ENCODE measurements at regions of chr3 and their contacts with region 1.

Region 1: DNA sequence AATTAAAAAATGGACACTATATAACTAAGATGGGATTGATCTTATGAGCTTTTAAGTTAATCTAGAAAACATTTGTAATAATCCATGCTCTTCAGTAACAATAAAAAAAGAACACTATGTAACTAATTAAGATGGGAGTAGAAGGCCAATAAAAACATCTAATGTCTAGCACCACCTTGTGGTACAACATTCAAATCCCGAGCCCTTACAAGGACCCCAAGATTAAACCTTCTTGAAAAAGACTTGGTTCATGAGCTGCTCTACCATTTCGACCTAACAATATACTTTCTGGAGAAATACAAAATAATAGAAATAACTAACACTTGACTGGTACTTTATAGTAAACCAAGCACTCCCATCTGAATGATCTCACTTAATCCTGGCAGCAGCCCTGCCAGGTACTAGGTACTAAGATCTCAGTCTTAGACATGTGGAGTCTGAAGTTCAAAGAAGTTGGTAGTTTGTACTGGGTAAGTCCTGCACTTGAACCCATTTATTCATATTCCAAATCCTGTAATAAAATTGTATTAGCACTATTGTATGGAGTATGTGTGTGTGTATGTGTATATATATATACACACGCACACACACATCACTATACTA is 21.8 kb downstream of the METTL6 start:
- DNase-seq: peak; percentile 49 to 61 (median 55)
- H3K4me3 ChIP-seq: no peak overlapping the region
- H3K4me3 Mint-ChIP-seq: no peak overlapping the region
- H3K27ac ChIP-seq: no peak overlapping the region
- H3K27ac Mint-ChIP-seq: peak overlapping the region in 4 of 7 donors; percentile 8 to 40 (median 24)
- H3K4me1 ChIP-seq: peaks cover 3% of the 10 kb centered on the region
- H3K4me1 Mint-ChIP-seq: peaks cover 7 to 22% (median 14%) of the 10 kb centered on the region in 4 donors
- H3K27me3 ChIP-seq: no peaks in the 10 kb centered on the region
- H3K27me3 Mint-ChIP-seq: no peaks in the 10 kb centered on the region

Region 2: DNA sequence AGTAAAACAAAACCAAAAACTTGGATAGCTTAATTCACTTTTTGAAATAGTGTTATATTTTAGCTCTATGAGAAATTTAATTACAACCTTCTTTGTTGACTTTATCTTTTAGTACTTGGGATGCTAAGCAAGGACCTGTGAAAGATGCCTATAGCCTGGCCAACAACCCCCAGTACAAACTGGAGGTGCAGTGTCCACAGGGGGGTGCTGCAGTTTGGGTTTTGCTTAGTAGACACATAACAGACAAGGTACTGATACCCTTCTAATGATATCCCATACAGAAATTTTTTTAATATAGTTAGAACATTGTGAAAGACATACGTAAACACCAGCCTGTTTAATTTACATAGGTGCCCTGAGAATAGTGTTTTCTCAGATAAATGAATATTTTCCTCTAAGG is 164.2 kb before region 1 on chr3:
- CTCF ChIA-PET with region 1: interaction called, 6 read pairs
- POLR2A ChIA-PET with region 1: no interaction called
- intact Hi-C with region 1: loop called (anchors 1 kb)
- DNase-seq: peak; percentile 36 to 51 (median 44)
- H3K4me3 ChIP-seq: no peak overlapping the region
- H3K4me3 Mint-ChIP-seq: no peak overlapping the region
- H3K27ac ChIP-seq: no peak overlapping the region
- H3K27ac Mint-ChIP-seq: peak overlapping the region in 1 of 7 donors; percentile 73
- H3K4me1 ChIP-seq: no peaks in the 10 kb centered on the region
- H3K4me1 Mint-ChIP-seq: peaks cover 0 to 9% (median 4%) of the 10 kb centered on the region in 4 donors
- H3K27me3 ChIP-seq: no peaks in the 10 kb centered on the region
- H3K27me3 Mint-ChIP-seq: no peaks in the 10 kb centered on the region

Region 3: DNA sequence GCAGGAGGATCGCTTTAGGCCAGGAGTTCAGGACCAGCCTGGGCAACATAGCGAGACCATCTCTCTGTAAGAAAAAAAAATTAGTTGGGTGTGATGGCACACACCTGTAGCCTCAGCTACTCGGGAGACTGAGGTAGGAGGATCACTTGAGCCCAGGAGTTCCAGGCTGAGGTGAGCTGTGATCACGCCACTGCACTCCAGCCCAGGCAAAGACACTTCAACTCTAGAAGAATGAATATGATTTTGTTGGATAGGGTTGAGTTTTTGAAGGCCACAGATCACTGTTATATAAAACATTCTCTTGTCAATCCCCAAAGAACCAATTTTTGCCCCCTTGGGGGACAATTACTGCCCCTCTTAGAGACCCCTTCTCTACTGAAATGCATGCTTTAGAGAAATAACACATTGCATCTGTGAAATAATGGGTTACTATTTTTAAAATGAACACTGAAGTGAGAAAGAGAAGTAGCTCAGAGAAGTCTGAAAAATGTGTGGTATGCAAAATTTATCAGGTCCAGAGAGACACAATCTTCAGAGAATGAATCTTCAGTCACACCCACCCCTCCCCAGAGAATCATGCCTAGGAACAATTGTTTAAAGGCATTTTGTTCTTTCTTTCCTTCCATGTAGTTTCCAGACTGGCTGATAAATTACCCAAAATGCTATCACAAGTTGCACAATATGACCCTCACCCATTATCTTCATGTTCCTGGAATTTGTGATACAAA is 20.9 kb before region 1 on chr3:
- CTCF ChIA-PET with region 1: interaction called, 12 read pairs
- POLR2A ChIA-PET with region 1: no interaction called
- intact Hi-C with region 1: no loop called
- DNase-seq: no peak
- H3K4me3 ChIP-seq: no peak overlapping the region
- H3K4me3 Mint-ChIP-seq: no peak overlapping the region
- H3K27ac ChIP-seq: no peak overlapping the region
- H3K27ac Mint-ChIP-seq: peak overlapping the region in 2 of 7 donors; percentile 37
- H3K4me1 ChIP-seq: no peaks in the 10 kb centered on the region
- H3K4me1 Mint-ChIP-seq: peaks cover 0 to 7% (median 3%) of the 10 kb centered on the region in 4 donors
- H3K27me3 ChIP-seq: no peaks in the 10 kb centered on the region
- H3K27me3 Mint-ChIP-seq: no peaks in the 10 kb centered on the region

Region 4: DNA sequence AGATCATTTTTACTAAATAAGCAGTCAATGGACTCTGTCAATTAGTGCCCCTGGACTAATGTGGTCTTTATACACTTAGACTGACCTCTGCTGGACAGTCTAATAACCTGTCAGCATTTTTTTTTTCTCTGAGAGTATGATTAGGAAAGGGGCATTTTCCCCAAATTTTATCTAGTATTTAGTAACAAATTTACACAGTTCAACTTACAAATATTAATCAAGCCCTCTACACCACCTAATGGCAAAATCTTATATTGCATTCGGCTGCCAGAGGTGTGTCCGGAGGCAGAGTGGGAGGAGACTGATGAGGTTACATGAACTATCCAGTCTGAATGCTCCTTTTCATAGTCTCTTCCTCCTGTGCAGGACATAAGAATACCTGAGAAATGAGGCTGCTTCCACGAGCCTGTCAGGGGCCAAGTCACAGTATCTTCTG is 152.0 kb after region 1 on chr3:
- CTCF ChIA-PET with region 1: interaction called, 12 read pairs
- POLR2A ChIA-PET with region 1: no interaction called
- intact Hi-C with region 1: no loop called
- DNase-seq: peak; percentile 67 to 82 (median 79)
- H3K4me3 ChIP-seq: no peak overlapping the region
- H3K4me3 Mint-ChIP-seq: peak overlapping the region in 2 of 8 donors; percentile 9 to 59
- H3K27ac ChIP-seq: no peak overlapping the region
- H3K27ac Mint-ChIP-seq: peak overlapping the region; percentile 5 to 75 (median 62)
- H3K4me1 ChIP-seq: peaks cover 19% of the 10 kb centered on the region
- H3K4me1 Mint-ChIP-seq: peaks cover 17 to 23% (median 20%) of the 10 kb centered on the region in 4 donors
- H3K27me3 ChIP-seq: no peaks in the 10 kb centered on the region
- H3K27me3 Mint-ChIP-seq: no peaks in the 10 kb centered on the region

Measured in CD4-positive, alpha-beta memory T cell (primary cell).